ENCODE measurements at regions of chr20 and their contacts with region 1.

Region 1: DNA sequence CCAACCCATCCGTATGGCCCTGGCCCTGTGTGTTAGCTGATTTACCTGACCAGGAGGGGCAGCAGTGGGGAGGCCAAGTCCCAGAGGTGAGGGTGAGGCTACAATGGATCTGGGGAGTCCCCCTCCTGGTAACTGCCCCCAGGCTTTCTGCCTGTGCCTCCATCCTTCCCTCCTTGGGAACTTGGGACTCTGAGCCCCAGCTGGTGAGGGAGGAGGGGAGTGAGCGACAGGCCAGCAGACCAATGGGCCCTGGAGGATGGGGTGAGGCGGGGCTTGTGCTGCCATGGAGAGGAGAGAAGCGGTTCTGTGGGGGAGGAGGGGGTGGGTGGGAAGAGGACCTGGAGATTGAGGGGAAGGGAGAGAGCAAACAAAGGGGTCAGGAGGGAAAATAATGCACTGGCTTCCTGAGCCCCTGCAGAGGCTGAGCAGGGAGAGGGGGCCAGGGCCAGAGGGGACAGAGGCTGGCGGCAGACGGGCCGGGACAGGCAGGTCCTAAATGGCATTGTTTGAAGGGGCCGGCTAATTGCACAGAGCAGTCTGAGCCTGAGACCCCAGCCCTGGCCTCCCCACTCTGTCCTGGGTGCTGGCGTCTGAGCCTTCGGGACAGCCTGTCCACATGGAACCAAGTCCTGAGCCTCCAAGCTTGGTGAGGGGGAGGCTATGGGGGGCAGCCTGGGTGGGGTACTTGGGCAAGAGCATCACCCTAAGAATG is 17.5 kb downstream of the DNMT3B start:
- DNase-seq: no peak
- H3K4me3 Mint-ChIP-seq: no peak overlapping the region
- H3K27ac Mint-ChIP-seq: no peak overlapping the region
- H3K4me1 Mint-ChIP-seq: peaks cover 17% of the 10 kb centered on the region
- H3K27me3 Mint-ChIP-seq: no peaks in the 10 kb centered on the region
- CTCF ChIP-seq: no peak

Region 2: DNA sequence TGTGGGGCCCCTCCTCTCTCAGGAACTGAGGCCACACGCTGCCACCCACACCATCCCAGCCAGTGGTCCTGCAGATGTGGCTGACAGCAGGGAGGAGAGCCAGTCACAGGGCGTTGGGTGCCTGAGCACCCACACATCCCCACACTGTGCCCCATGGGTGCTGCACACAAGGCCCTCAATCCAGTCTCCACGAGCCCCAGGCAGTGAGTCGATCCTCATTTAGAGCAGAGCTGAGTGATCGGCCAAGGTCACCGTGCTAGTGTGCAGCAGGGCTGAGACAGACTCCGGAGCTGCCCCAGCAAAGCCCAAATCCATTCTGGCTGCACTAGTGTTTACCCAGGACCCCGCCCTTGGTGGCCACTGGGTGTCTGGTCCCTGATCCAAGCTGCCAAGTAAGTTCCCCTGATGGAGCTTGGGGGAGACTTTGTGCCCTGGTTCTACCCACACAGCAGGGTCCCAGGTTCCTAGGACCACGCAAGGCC is 114.9 kb before region 1 on chr20:
- CTCF ChIA-PET with region 1: interaction called, 14 read pairs
- POLR2A ChIA-PET with region 1: no interaction called
- intact Hi-C with region 1: no loop called
- DNase-seq: no peak
- H3K4me3 Mint-ChIP-seq: no peak overlapping the region
- H3K27ac Mint-ChIP-seq: no peak overlapping the region
- H3K4me1 Mint-ChIP-seq: peaks cover 6% of the 10 kb centered on the region
- H3K27me3 Mint-ChIP-seq: no peaks in the 10 kb centered on the region
- CTCF ChIP-seq: no peak

Region 3: GRCh38 chr20:32681175-32682084 is 98.2 kb before region 1 on chr20:
- CTCF ChIA-PET with region 1: interaction called, 202 read pairs
- POLR2A ChIA-PET with region 1: no interaction called
- intact Hi-C with region 1: no loop called
- DNase-seq: peak; percentile 79
- H3K4me3 Mint-ChIP-seq: no peak overlapping the region
- H3K27ac Mint-ChIP-seq: peak overlapping the region; percentile 25
- H3K4me1 Mint-ChIP-seq: peaks cover 13% of the 10 kb centered on the region
- H3K27me3 Mint-ChIP-seq: no peaks in the 10 kb centered on the region
- CTCF ChIP-seq: no peak

Region 4: GRCh38 chr20:32737371-32738223 is 42.1 kb before region 1 on chr20:
- CTCF ChIA-PET with region 1: interaction called, 10 read pairs
- POLR2A ChIA-PET with region 1: no interaction called
- intact Hi-C with region 1: no loop called
- DNase-seq: peak; percentile 32
- H3K4me3 Mint-ChIP-seq: no peak overlapping the region
- H3K27ac Mint-ChIP-seq: no peak overlapping the region
- H3K4me1 Mint-ChIP-seq: peaks cover 2% of the 10 kb centered on the region
- H3K27me3 Mint-ChIP-seq: no peaks in the 10 kb centered on the region
- CTCF ChIP-seq: no peak

Region 5: GRCh38 chr20:33178726-33179125 is 399.1 kb after region 1 on chr20:
- CTCF ChIA-PET with region 1: no interaction called
- POLR2A ChIA-PET with region 1: no interaction called
- intact Hi-C with region 1: no loop called
- DNase-seq: no peak
- H3K4me3 Mint-ChIP-seq: no peak overlapping the region
- H3K27ac Mint-ChIP-seq: no peak overlapping the region
- H3K4me1 Mint-ChIP-seq: no peaks in the 10 kb centered on the region
- H3K27me3 Mint-ChIP-seq: peaks cover 10% of the 10 kb centered on the region
- CTCF ChIP-seq: no peak